Right ventricle myocardium superior (tissue), 1 donor: ENCODE measurements at regions of chr2 and their contacts with region 1.

Region 1: GRCh38 chr2:68832233-68832869 is 38.8 kb downstream of the BMP10 start:
- DNase-seq: peak; percentile 48
- ATAC-seq: peak; percentile 33

Region 2: GRCh38 chr2:68751397-68752339 is 80.7 kb before region 1 on chr2:
- intact Hi-C with region 1: loop called (anchors 5 kb)
- DNase-seq: peak; percentile 92
- ATAC-seq: peak; percentile 97